Calu3 (cell line): ENCODE measurements at regions of chr2 and their contacts with region 1.

Region 1: DNA sequence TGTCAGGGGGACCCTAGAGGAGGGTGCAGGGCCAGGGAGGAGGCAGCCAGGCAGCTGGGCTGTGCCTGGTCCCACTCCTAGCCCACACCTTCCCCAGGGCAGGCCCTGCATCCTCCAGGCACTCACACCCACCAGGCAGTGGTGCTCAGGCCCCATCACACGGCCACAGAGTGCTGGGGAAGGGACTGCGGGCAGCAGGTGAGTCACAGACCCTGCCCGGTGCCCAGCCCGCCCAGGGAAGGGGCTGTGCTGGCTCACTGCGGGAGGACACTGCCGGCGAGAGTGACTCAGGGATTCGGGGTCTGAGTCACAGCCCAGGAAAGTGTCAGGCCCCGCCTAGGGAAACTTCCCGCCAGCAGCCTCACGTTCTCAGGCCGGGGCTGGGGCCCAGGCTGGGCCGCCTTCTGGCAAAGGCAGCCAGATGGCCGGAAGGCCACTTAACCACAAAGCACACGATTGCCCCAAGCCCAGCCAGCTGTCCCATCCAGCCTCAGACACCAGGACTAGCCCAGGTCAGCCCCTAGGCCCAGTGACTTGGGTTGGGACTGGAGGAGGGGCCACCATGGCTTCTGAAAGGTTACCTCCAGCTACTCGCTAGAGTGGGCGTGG is 42.2 kb downstream of the BIN1 start:
- DNase-seq: peak; percentile 96
- H3K4me3 Mint-ChIP-seq: peak overlapping the region; percentile 41
- H3K27ac Mint-ChIP-seq: peak overlapping the region; percentile 52
- H3K4me1 Mint-ChIP-seq: peaks cover 28% of the 10 kb centered on the region
- H3K27me3 Mint-ChIP-seq: no peaks in the 10 kb centered on the region
- CTCF ChIP-seq: no peak

Region 2: DNA sequence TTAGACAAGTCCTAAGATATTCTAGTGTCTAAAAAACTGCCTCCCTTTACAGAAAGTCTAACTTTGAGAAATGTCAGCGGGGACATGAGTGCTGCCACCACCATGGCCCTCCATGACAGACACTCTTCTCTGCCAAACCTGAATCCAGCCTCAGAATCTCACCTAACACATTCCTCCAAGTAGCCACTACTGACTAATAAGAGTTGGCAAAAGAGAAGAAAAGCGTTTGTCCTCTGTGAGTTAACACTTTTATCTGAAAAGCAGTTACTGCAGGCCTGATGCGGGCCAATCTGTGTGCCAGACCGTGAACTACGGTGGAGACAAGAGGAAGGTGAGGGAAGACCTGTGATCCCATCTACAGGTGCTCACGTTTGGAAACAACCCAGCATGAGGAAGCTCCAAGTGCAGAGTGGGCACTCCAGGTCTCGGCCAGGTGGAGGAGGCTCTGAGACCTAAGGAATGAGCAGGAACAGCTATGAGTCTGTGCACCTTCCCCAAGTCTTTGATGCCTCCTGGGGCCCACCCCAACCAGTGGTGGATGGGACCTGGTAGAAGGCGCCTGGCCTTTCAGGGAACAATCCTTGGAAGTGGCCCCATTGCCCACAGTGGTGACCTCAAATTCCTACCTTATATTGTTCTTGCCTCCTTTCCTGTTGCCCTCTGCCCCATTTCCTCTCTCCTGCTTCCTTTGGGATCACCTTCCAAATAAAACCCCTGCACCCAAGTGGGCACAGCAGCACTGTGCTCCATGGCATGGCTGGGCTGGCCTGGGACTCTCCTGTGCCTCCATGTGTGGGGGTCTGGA is 49.4 kb before region 1 on chr2:
- CTCF ChIA-PET with region 1: interaction called, 18 read pairs
- intact Hi-C with region 1: no loop called
- DNase-seq: no peak
- H3K4me3 Mint-ChIP-seq: no peak overlapping the region
- H3K27ac Mint-ChIP-seq: no peak overlapping the region
- H3K4me1 Mint-ChIP-seq: no peaks in the 10 kb centered on the region
- H3K27me3 Mint-ChIP-seq: peaks cover 62% of the 10 kb centered on the region
- CTCF ChIP-seq: no peak

Region 3: DNA sequence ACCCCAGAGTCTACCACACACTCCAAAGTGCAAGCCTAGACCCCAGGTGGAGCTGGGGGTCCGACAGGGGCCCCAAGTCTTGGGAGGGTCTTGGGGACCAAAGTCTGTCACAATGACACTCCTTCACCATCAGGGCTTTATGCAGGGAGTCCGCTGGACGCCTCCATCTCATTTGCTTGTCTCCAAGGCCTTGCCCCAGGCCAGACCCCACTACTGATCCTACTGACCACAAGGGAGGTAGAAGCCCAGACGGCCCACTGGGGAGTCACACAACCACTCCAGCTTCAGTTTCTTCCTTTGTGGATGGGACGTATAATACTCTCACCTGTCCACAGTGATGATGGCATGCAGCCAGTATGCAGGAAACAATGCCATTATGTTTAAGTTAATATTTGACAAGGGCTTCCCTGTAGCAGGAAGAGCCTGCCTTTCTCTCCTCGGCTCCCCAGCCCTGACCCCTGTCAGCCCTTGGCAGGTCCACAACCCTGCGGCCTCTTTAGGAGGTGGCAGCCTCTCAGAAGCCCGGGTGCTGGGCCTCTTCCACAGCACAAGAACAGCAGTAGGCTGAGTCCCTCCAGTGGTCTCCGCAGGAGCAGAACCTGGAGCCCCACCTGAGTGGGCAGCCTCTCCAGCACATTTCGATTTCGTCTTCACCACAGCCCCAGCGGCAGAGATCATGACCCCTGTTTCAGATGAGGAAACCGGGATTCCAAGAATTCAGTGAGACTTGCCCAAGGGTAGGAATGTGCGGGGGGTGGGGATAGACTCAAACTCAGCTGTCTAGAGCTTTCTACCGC is 35.7 kb after region 1 on chr2:
- CTCF ChIA-PET with region 1: interaction called, 4 read pairs
- intact Hi-C with region 1: loop called (anchors 5 kb)
- DNase-seq: peak; percentile 81
- H3K4me3 Mint-ChIP-seq: peak overlapping the region; percentile 57
- H3K27ac Mint-ChIP-seq: peak overlapping the region; percentile 84
- H3K4me1 Mint-ChIP-seq: peaks cover 60% of the 10 kb centered on the region
- H3K27me3 Mint-ChIP-seq: no peaks in the 10 kb centered on the region
- CTCF ChIP-seq: no peak

Region 4: GRCh38 chr2:127128445-127128904 is 63.7 kb after region 1 on chr2:
- CTCF ChIA-PET with region 1: interaction called, 3 read pairs
- intact Hi-C with region 1: loop called (anchors 1 kb)
- DNase-seq: peak; percentile 74
- H3K4me3 Mint-ChIP-seq: no peak overlapping the region
- H3K27ac Mint-ChIP-seq: no peak overlapping the region
- H3K4me1 Mint-ChIP-seq: no peaks in the 10 kb centered on the region
- H3K27me3 Mint-ChIP-seq: no peaks in the 10 kb centered on the region
- CTCF ChIP-seq: no peak

Region 5: DNA sequence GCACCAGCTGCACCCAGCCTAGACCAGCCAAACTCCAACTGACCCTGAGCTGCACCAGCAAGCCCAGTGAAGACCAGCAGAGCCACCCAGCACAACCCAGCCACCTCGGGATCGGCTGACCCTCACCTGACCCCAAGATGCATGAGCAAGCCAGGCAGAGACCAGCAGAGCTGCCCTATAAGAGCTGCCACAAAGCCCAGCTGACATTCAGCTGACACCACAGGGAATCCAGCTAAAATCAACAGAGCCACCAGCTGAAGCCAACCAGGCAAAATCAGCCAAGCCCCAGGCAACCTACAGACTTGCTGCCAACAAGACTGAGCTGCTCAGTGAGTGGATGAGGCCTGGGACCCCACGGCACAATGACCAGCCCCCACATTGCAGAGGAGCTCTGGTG is 100.8 kb after region 1 on chr2:
- CTCF ChIA-PET with region 1: interaction called, 3 read pairs
- intact Hi-C with region 1: loop called (anchors 5 kb)
- DNase-seq: peak; percentile 41
- H3K4me3 Mint-ChIP-seq: no peak overlapping the region
- H3K27ac Mint-ChIP-seq: peak overlapping the region; percentile 60
- H3K4me1 Mint-ChIP-seq: peaks cover 33% of the 10 kb centered on the region
- H3K27me3 Mint-ChIP-seq: no peaks in the 10 kb centered on the region
- CTCF ChIP-seq: no peak

Region 6: GRCh38 chr2:127197475-127198385 is 133.0 kb after region 1 on chr2:
- CTCF ChIA-PET with region 1: interaction called, 10 read pairs
- intact Hi-C with region 1: no loop called
- DNase-seq: peak; percentile 87
- H3K4me3 Mint-ChIP-seq: peak overlapping the region; percentile 75
- H3K27ac Mint-ChIP-seq: peak overlapping the region; percentile 2
- H3K4me1 Mint-ChIP-seq: peaks cover 8% of the 10 kb centered on the region
- H3K27me3 Mint-ChIP-seq: peaks cover 26% of the 10 kb centered on the region
- CTCF ChIP-seq: peak; percentile 41